Panc1 (cell line): ENCODE measurements at regions of chr3 and their contacts with region 1.

Region 1: GRCh38 chr3:129195731-129196256 is 12.1 kb upstream of the CNBP start:
- DNase-seq: peak; percentile 73
- ATAC-seq: peak; percentile 93
- H3K4me3 ChIP-seq: no peak overlapping the region
- H3K27ac ChIP-seq: peak overlapping the region; percentile 65
- H3K4me1 ChIP-seq: peaks cover 22% of the 10 kb centered on the region
- H3K27me3 ChIP-seq: no peaks in the 10 kb centered on the region
- CTCF ChIP-seq: no peak

Region 2: DNA sequence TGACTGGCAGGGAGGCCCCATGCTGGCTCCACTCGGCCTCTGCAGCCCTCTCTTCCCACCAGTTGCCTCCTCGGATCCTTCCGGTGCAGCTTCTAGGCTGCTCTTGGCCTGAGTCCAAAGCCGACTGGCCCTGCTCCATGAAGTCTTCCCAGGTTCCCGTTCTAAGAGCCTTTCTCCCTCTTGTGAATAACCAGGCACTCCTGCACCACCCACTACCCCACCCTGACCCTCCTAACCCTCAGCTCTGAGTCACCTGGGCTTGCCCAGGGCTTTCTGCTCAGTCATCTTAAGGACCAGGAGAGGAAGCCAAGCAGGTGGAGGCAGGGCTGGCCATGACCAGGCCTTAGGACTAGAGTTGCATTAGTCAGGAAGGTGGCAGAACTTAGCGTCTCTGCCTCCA is 16.0 kb after region 1 on chr3:
- CTCF ChIA-PET with region 1: interaction called, 16 read pairs
- POLR2A ChIA-PET with region 1: no interaction called
- in situ Hi-C with region 1: no loop called
- intact Hi-C with region 1: no loop called
- DNase-seq: peak; percentile 97
- ATAC-seq: peak; percentile 96
- H3K4me3 ChIP-seq: no peak overlapping the region; a peak in 1 of 4 replicates
- H3K27ac ChIP-seq: peak overlapping the region; percentile 80
- H3K4me1 ChIP-seq: peaks cover 19% of the 10 kb centered on the region
- H3K27me3 ChIP-seq: no peaks in the 10 kb centered on the region
- CTCF ChIP-seq: no peak